Common myeloid progenitor, CD34-positive (primary cell): ENCODE measurements at regions of chr14 and their contacts with region 1.

Region 1: DNA sequence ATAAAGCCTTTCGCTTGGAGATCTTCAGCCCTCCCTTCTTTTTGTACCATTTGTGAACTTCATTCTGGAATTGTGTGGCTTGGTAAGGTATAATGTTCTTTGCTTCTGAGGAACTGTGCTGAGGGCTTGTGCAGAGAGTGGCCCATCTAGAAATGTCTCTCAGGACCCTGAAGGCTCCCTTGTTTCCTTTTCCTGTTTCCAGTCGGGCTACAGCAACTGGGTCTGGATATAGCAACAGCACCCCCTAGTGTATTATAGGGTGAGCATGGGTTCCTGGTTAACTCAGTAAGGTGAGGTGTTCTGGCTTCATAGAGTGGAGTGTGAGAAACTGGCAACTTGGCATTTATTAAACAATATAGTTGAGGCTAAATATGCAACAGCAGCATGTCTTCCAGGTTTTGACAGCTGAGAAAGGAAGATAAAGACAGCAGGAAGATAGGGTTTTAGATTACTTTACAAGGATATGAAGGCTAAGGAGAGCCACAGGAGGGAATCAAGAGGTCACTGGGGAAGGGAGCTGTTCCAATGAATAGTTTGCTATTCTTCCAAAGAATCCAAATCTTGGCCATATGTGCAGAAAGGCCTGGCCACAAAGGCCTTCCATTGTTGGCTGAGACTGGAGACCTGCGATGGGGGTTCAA is 49.1 kb upstream of the RNU6-8 start:
- DNase-seq: peak; percentile 74 to 80 (median 79)
- H3K4me3 ChIP-seq: peak overlapping the region in 2 of 7 experiments; percentile 17 to 40
- H3K27ac ChIP-seq: no peak overlapping the region
- H3K4me1 ChIP-seq: peaks cover 0 to 2% (median 0%) of the 10 kb centered on the region in 4 experiments
- H3K27me3 ChIP-seq: no peaks in the 10 kb centered on the region

Region 2: GRCh38 chr14:31926123-31926522 is 326.0 kb before region 1 on chr14:
- CTCF ChIA-PET with region 1: interaction called, 102 read pairs
- POLR2A ChIA-PET with region 1: no interaction called
- DNase-seq: peak; percentile 44 to 71 (median 70)
- H3K4me3 ChIP-seq: no peak overlapping the region
- H3K27ac ChIP-seq: no peak overlapping the region
- H3K4me1 ChIP-seq: no peaks in the 10 kb centered on the region
- H3K27me3 ChIP-seq: peaks cover 0 to 2% (median 0%) of the 10 kb centered on the region in 5 experiments

Region 3: DNA sequence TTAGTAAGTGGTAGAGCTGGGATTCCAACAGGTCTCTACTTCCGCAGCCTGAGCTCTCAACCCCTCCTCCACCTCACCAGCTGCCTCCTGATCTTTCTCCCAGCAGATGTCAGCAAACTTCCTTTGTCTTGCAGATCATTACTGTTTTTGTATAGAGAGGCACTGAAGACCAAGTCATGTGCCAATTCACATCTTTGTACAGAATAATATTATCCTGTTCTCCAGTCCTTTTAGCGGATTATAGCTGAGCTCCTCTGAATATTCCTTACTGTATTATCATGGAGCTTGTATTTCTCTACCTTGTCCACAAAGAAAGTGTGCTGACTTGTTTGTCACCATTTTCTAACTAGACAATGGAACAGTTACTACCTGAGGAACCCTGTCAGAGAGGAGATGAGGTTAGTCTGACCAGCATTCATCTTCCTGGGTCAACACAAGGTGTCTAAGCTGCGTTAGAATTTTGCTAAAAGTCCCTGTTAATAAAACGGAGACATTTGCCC is 317.3 kb before region 1 on chr14:
- CTCF ChIA-PET with region 1: interaction called, 102 read pairs
- POLR2A ChIA-PET with region 1: no interaction called
- DNase-seq: peak; percentile 22 to 57 (median 48)
- H3K4me3 ChIP-seq: no peak overlapping the region
- H3K27ac ChIP-seq: no peak overlapping the region
- H3K4me1 ChIP-seq: peaks cover 0 to 2% (median under 1%) of the 10 kb centered on the region in 4 experiments
- H3K27me3 ChIP-seq: no peaks in the 10 kb centered on the region

Region 4: DNA sequence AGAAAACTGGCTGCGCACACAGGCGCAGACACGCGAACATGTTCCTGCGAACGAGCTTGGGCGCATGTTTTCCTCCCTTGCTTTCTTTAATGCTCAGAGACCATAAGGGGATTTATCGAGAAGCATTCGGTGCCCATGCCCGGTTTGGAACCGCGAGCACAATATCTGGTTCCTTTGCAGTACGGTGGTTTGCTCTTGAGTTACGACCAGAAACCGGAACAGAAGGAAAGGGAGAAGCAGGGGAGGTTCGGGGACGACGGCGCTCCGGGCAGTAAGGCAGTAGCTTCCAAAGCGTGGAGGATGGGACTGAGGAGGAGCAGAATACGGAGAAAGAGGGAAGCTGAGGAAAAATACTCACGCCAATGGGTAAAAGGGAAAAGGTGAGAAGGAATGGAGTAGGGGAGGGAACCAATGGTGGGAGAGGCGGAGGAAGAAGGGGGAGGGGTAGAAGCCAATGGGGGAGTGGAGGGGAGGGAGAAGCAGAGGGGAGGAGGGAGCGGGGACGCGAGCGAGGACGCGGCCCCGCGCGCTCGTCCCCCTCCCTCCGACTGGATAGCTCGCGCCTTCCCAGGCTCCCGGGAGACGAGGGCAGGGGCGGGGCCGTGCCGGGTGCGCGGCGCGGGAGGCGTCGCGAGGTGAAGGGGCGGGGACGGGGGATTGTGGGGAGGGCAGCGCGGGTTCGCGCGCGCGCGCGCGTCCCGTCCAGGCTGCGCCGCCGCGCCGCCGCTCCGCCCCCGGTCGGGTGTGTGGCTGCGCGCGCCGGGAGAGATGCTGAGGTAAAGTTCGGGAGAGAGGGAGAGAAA is 175.7 kb before region 1 on chr14:
- CTCF ChIA-PET with region 1: interaction called, 129 read pairs
- POLR2A ChIA-PET with region 1: no interaction called
- DNase-seq: peak; percentile 91 to 96 (median 96)
- H3K4me3 ChIP-seq: peak overlapping the region; percentile 85 to 99 (median 99)
- H3K27ac ChIP-seq: peak overlapping the region; percentile 71 to 91
- H3K4me1 ChIP-seq: peaks cover 18 to 37% (median 24%) of the 10 kb centered on the region in 4 experiments
- H3K27me3 ChIP-seq: no peaks in the 10 kb centered on the region

Region 5: DNA sequence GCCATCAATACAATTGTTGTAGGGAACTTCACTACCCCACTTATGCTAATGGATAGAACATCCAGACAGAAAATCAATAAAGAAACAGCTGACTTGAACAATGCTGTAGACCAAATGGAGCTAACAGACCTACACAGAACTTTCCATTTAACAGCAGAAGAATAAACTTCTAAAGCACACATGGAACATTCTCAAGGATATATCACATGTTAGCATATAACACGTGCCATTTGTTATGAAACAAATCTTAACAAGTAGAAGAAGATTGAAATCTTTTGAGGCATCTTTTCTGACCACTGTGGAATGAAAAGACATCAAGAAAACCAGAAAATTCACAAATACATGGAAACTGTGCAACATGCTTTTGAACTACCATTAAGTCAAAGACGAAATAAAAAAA is 13.4 kb after region 1 on chr14:
- CTCF ChIA-PET with region 1: no interaction called
- POLR2A ChIA-PET with region 1: no interaction called
- DNase-seq: no peak
- H3K4me3 ChIP-seq: no peak overlapping the region
- H3K27ac ChIP-seq: no peak overlapping the region
- H3K4me1 ChIP-seq: no peaks in the 10 kb centered on the region
- H3K27me3 ChIP-seq: no peaks in the 10 kb centered on the region

Region 6: DNA sequence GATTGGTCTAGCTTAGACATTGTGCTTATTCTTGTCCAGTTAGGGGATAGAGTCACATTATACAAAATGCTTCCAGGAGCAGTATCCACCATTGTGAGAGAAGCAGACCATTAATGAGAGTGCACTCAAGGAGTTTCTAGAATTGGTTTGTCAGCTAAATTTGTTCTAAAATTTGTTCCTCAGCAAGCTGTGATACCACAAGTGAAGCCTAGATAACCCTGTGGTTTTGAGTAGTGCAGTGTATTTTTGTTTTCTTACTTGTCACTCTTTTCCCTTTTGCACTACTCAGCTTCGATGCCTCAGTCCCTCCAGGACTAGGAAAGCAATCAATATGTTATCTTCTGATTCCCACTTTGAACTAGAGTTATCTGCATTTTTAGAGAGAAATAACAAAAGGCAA is 34.5 kb after region 1 on chr14:
- CTCF ChIA-PET with region 1: no interaction called
- POLR2A ChIA-PET with region 1: no interaction called
- DNase-seq: no peak
- H3K4me3 ChIP-seq: no peak overlapping the region
- H3K27ac ChIP-seq: no peak overlapping the region
- H3K4me1 ChIP-seq: no peaks in the 10 kb centered on the region
- H3K27me3 ChIP-seq: no peaks in the 10 kb centered on the region